Dorsolateral prefrontal cortex (tissue), 120 donors: ENCODE measurements at regions of chr1 and their contacts with region 1.

Region 1: DNA sequence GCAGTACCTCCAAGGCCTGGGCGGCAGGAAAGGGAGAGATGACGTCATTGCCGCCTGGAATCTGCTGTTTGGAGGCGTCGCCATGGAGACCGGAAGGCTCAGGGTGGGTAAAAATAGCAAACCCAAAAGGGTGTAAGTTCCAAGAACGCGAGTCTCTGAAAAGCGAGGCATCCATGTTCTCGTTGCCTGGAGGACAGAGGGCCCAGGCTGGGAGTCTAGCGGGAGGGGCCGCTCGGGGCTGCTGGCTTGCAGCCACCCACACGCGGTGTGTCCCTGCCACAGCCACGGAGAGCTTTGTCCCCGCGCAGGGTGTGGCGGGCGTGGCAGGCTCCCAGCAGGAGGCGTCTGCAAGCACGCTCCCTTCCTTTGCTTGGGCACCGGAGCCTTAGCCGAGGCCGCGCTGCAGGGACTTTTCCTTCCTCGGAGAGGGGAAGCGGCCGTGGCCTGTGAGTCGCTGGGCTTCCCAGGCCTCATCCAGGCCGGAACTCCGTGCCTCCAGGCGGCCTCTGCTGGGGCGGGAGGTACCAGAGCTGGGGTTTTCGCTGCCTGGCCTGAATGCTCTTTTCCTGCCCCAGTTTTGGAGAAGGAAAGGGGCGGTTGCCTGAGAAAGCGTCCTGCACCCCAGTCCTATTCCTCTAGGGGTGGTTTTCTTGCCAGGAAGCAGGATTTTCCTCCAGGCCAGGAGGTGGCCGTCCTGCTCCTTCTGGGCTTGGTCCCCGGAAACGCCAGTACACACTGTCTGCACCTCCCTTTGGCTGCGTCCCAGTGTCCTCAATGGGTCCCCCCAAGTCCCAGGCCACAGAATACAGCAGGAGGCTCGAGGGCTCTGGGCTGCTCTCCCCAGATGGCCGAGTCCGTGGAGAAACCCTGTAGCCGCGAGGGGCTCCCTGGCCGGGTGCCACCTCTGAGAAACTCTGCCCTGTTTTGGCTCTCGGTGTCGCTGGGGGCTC is 15.3 kb upstream of the SKI start:
- DNase-seq: peak; percentile 55 to 90 (median 86)
- H3K4me3 ChIP-seq: peak overlapping the region; percentile 7 to 63 (median 47)
- H3K27ac ChIP-seq: peak overlapping the region; percentile 61 to 99 (median 95)
- H3K27me3 ChIP-seq: no peaks in the 10 kb centered on the region
- CTCF ChIP-seq: peak in 46 of 56 donors; percentile 5 to 54 (median 28)

Region 2: DNA sequence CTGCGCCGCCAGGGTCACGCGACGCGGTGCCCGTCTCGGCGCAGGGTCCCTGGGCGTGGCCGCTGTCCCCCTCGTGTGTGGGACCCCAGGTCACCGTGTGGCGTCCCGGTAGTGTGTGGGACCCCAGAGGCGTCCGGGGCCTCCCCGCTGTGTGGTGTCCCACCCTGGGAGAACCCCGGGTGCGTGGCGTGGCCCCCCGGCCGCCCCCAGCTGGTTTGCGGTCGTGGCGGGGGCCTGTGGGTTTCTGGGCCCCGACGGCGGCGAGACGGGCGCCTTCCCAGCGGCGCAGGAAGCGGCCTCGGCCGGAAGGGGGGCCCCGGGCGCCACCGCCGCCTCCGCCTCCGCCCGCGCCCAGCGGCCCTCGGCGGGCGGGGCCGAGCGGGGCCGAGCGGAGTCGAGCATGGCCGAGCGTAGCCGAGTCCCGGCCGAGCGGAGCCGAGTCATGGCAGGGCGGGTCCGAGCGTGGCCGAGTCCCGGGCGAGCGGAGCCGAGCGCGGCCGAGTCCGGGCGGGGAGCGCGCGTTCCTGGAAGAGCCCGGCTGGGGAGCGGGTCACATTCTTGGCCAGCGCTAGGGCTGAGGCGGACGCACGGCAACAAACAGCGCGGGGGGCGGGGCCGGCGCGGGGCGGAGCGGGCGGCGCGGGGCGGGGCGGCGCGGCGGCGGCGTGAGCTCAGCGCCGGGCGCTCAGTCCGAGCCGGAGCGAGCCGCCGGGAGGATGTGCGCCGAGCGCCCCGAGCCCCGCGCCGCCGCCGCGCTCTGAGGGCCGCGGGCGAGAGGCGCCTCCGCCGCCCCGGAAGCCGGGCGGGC is 14.7 kb after region 1 on chr1:
- intact Hi-C with region 1: loop called (anchors 2 kb)
- DNase-seq: peak; percentile 83 to 96 (median 93)
- H3K4me3 ChIP-seq: peak overlapping the region; percentile 54 to 86 (median 74)
- H3K27ac ChIP-seq: peak overlapping the region; percentile 76 to 99 (median 95)
- H3K27me3 ChIP-seq: no peaks in the 10 kb centered on the region
- CTCF ChIP-seq: peak in 5 of 56 donors; percentile 4 to 34 (median 18)

Region 3: GRCh38 chr1:2429780-2430591 is 217.2 kb after region 1 on chr1:
- intact Hi-C with region 1: no loop called
- DNase-seq: no peak
- H3K4me3 ChIP-seq: no peak overlapping the region
- H3K27ac ChIP-seq: no peak overlapping the region
- H3K27me3 ChIP-seq: peaks cover 0 to 9% (median 0%) of the 10 kb centered on the region in 45 donors
- CTCF ChIP-seq: peak in 12 of 56 donors; percentile 9 to 43 (median 16)

Region 4: DNA sequence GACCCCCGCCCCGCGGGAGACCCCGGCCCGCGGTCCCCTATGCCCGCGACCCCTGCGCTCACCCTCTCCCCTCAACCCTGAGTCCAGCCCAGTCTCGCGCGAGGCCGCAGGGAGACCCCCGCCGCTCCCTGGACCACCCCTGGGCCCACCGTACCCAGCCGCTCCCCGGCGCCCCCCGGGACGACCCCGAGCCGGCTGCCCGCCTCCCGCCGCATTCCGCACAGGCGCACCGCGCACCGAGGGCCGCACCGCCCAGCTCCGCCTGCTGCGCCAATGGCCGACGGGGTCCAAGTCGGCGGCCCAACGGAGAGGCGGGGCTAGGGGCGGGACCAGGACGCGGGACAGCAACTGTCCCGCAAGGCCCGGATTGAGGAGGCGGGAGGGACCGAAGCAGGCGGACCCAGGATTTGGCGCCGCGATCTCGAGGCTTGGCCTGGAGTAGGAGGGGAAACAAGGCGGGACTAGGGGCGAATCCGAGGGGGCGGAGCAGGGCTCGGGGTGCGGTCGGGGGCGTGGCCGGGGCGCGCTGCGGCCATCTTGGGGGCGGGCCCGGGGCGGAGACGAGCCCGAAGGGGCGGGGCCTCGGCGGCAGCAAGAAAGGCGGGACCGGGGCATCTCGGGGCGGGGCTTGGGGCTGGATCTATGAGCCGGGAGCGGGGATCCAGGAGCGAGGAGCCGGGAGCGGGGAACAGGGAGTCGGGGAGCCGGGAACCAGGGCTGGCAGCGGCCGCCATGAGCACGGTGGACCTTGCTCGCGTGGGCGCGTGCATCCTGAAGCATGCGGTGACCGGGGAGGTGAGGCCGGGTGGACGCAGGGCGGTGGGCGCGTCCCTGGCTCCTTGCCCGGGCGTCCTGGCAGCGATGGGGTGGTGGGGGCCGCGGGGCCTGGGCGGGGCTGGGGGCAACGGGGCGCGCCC is 373.6 kb after region 1 on chr1 and contains the start of gene PRXL2B:
- intact Hi-C with region 1: loop called in 1 of 2 experiments (anchors 10 kb)
- DNase-seq: peak; percentile 97 to 99 (median 99)
- H3K4me3 ChIP-seq: peak within 1 kb of the TSS; percentile 67 to 95 (median 85)
- H3K27ac ChIP-seq: peak within 1 kb of the TSS; percentile 55 to 99 (median 94)
- H3K27me3 ChIP-seq: no peaks in the 10 kb centered on the region
- CTCF ChIP-seq: peak in 8 of 56 donors; percentile 5 to 26 (median 12)
- total RNA-seq, gene PRXL2B: 24.0 to 76.4 (median 50.5) TPM